ENCODE measurements at regions of chr2 and their contacts with region 1.

Region 1: GRCh38 chr2:45494269-45494977 is 116.6 kb downstream of the SRBD1 start:
- DNase-seq: no peak
- H3K4me3 ChIP-seq: no peak overlapping the region
- H3K27ac ChIP-seq: no peak overlapping the region
- H3K4me1 ChIP-seq: no peaks in the 10 kb centered on the region
- H3K27me3 ChIP-seq: no peaks in the 10 kb centered on the region
- CTCF ChIP-seq: peak; percentile 84 to 89

Region 2: GRCh38 chr2:44981136-44982108 is 513.0 kb before region 1 on chr2:
- intact Hi-C with region 1: loop called (anchors 2 kb)
- DNase-seq: peak; percentile 58 to 81
- H3K4me3 ChIP-seq: no peak overlapping the region
- H3K27ac ChIP-seq: no peak overlapping the region
- H3K4me1 ChIP-seq: no peaks in the 10 kb centered on the region
- H3K27me3 ChIP-seq: peaks cover 0 to 22% of the 10 kb centered on the region in 2 donors
- CTCF ChIP-seq: peak; percentile 78 to 87

Region 3: GRCh38 chr2:45024600-45025291 is 469.7 kb before region 1 on chr2:
- intact Hi-C with region 1: loop called (anchors 10 kb)
- DNase-seq: peak; percentile 40 to 90
- H3K4me3 ChIP-seq: no peak overlapping the region
- H3K27ac ChIP-seq: peak overlapping the region in 1 of 2 donors; percentile 37
- H3K4me1 ChIP-seq: peaks cover 0 to 10% (median 5%) of the 10 kb centered on the region in 4 donors
- H3K27me3 ChIP-seq: no peaks in the 10 kb centered on the region
- CTCF ChIP-seq: peak; percentile 12 to 22

Measured in tibial artery (tissue), 4 donors.